A673 (cell line): ENCODE measurements at regions of chr20 and their contacts with region 1.

Region 1: GRCh38 chr20:1509237-1509636 is 18.0 kb upstream of the SIRPB2 start:
- DNase-seq: peak; percentile 62
- H3K4me3 ChIP-seq: no peak overlapping the region
- H3K27ac ChIP-seq: no peak overlapping the region
- H3K4me1 ChIP-seq: no peaks in the 10 kb centered on the region
- H3K27me3 ChIP-seq: peaks cover 6% of the 10 kb centered on the region
- CTCF ChIP-seq: peak; percentile 69

Region 2: DNA sequence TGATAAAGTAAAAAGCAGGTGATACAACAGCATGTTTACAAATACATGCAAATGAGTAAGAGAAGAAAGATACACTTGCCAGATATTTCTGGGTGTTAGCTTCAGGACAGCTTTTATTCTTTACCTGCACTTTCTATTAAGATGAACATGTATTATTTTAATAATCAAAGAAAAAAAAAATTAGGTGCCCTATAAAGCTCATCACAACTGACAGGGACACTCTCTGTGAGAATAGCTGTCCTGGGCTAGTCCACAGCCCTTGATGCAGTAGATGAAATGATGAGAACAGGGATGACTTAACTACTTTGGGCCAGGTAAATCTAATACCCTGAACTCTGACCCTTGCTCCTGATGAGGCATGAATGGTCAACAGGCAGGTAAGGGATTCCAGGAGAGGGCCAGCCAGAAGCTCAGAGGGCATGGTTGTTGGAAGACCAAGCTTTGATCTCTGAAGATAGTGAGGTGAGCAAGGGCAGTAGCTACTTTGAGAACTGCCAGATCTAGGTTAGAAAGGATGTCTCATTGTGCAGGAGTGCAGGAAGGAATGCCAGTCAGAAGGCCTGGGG is 58.2 kb before region 1 on chr20:
- CTCF ChIA-PET with region 1: no interaction called
- POLR2A ChIA-PET with region 1: no interaction called
- intact Hi-C with region 1: no loop called
- DNase-seq: no peak
- H3K4me3 ChIP-seq: no peak overlapping the region
- H3K27ac ChIP-seq: no peak overlapping the region
- H3K4me1 ChIP-seq: no peaks in the 10 kb centered on the region
- H3K27me3 ChIP-seq: no peaks in the 10 kb centered on the region
- CTCF ChIP-seq: no peak

Region 3: GRCh38 chr20:1734269-1734858 is 225.1 kb after region 1 on chr20:
- CTCF ChIA-PET with region 1: interaction called, 3 read pairs
- POLR2A ChIA-PET with region 1: no interaction called
- intact Hi-C with region 1: loop called (anchors 1 kb)
- DNase-seq: peak; percentile 32
- H3K4me3 ChIP-seq: no peak overlapping the region
- H3K27ac ChIP-seq: no peak overlapping the region
- H3K4me1 ChIP-seq: no peaks in the 10 kb centered on the region
- H3K27me3 ChIP-seq: peaks cover 3% of the 10 kb centered on the region
- CTCF ChIP-seq: peak; percentile 37; the same call in 1 of the 2 replicates

Region 4: GRCh38 chr20:1776681-1777475 is 267.6 kb after region 1 on chr20:
- CTCF ChIA-PET with region 1: interaction called, 14 read pairs
- POLR2A ChIA-PET with region 1: no interaction called
- intact Hi-C with region 1: loop called (anchors 5 kb)
- DNase-seq: peak; percentile 93
- H3K4me3 ChIP-seq: peak overlapping the region; percentile 74
- H3K27ac ChIP-seq: peak overlapping the region; percentile 62
- H3K4me1 ChIP-seq: peaks cover 4% of the 10 kb centered on the region
- H3K27me3 ChIP-seq: no peaks in the 10 kb centered on the region
- CTCF ChIP-seq: peak; percentile 80

Region 5: GRCh38 chr20:1894951-1895673 is 385.9 kb after region 1 on chr20 and contains the start of gene SIRPA:
- CTCF ChIA-PET with region 1: no interaction called
- POLR2A ChIA-PET with region 1: no interaction called
- intact Hi-C with region 1: no loop called
- DNase-seq: peak; percentile 84
- H3K4me3 ChIP-seq: peak within 1 kb of the TSS; percentile 88
- H3K27ac ChIP-seq: peak within 1 kb of the TSS; percentile 92
- H3K4me1 ChIP-seq: peaks cover 69% of the 10 kb centered on the region
- H3K27me3 ChIP-seq: no peaks in the 10 kb centered on the region
- CTCF ChIP-seq: no peak
- total RNA-seq, gene SIRPA: 81.0 and 81.2 TPM in 2 replicates